Aorta (tissue), 5 donors: ENCODE measurements at regions of chr17 and their contacts with region 1.

Region 1: GRCh38 chr17:57833179-57833939 is 16.5 kb downstream of the MRPS23 start:
- DNase-seq: peak; percentile 70 to 85
- ATAC-seq: peak; percentile 88
- H3K4me3 ChIP-seq: peak overlapping the region; percentile 37 to 81
- H3K27ac ChIP-seq: peak overlapping the region in 1 of 2 donors; percentile 77
- H3K4me1 ChIP-seq: peaks cover 0 to 2% of the 10 kb centered on the region in 2 donors
- H3K27me3 ChIP-seq: no peaks in the 10 kb centered on the region

Region 2: GRCh38 chr17:57130761-57131461 is 702.4 kb before region 1 on chr17:
- intact Hi-C with region 1: loop called in 1 of 2 experiments (anchors 5 kb)
- DNase-seq: peak; percentile 85 to 91
- ATAC-seq: peak; percentile 89
- H3K4me3 ChIP-seq: no peak overlapping the region
- H3K27ac ChIP-seq: no peak overlapping the region
- H3K4me1 ChIP-seq: no peaks in the 10 kb centered on the region
- H3K27me3 ChIP-seq: no peaks in the 10 kb centered on the region

Region 3: GRCh38 chr17:57243171-57243948 is 590.0 kb before region 1 on chr17:
- intact Hi-C with region 1: loop called in 1 of 2 experiments (anchors 10 kb)
- DNase-seq: peak; percentile 65 to 87
- ATAC-seq: peak; percentile 91
- H3K4me3 ChIP-seq: no peak overlapping the region
- H3K27ac ChIP-seq: no peak overlapping the region
- H3K4me1 ChIP-seq: peaks cover 0 to 3% of the 10 kb centered on the region in 2 donors
- H3K27me3 ChIP-seq: no peaks in the 10 kb centered on the region

Region 4: GRCh38 chr17:57597531-57598453 is 235.6 kb before region 1 on chr17:
- intact Hi-C with region 1: loop called in 1 of 2 experiments (anchors 5 kb)
- DNase-seq: peak in 1 of 2 donors; percentile 83
- ATAC-seq: peak; percentile 85
- H3K4me3 ChIP-seq: no peak overlapping the region
- H3K27ac ChIP-seq: no peak overlapping the region
- H3K4me1 ChIP-seq: peaks cover 0 to 3% of the 10 kb centered on the region in 2 donors
- H3K27me3 ChIP-seq: no peaks in the 10 kb centered on the region

Region 5: DNA sequence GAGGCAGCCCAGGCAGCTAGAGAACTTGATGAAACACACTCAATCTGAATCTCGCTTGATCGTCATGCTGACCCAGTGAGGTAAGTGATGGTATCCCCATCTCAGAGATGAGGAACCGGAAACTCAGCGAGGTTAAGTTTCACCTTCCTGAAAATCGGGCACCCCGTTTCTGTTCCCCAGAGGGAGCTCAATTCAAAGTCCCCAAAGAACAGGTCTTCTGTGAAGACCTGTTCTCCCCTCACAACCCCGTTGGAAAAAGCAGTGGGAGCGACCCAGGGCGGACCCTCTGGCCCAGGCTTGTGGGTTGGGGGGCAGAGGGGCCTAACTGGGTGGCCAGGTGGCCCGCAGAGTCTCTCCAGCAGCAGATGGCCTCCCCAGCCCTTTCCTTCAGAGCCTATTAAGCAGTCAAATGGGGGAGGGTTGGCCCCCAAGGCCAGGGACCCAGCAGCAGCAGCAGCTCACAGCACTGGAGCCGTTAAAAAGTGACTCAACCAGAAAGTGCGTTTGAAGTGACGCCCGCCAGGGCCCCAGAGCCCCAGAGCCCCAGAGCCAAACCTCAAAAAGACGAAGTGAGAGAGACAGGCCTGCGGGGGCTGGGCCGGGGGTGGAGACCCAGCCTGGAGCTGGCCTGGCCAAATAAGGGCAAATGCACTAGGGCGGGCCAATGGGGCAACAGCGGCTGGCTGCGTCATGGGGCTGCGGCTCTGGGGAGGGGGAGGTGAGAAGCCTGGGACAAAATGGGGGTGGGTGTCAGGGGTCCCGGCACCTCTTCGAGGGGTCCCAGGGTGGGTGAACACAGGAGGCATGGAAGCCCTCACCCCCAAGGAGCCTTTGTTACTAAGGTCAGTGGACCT is 504.5 kb after region 1 on chr17:
- intact Hi-C with region 1: no loop called
- DNase-seq: peak; percentile 89 to 93
- ATAC-seq: peak; percentile 72
- H3K4me3 ChIP-seq: no peak overlapping the region
- H3K27ac ChIP-seq: no peak overlapping the region
- H3K4me1 ChIP-seq: no peaks in the 10 kb centered on the region
- H3K27me3 ChIP-seq: no peaks in the 10 kb centered on the region